Activated naive CD4-positive, alpha-beta T cell treated with anti-CD3 and anti-CD28 coated beads for 36 hours (primary cell): ENCODE measurements at regions of chr20 and their contacts with region 1.

Region 1: DNA sequence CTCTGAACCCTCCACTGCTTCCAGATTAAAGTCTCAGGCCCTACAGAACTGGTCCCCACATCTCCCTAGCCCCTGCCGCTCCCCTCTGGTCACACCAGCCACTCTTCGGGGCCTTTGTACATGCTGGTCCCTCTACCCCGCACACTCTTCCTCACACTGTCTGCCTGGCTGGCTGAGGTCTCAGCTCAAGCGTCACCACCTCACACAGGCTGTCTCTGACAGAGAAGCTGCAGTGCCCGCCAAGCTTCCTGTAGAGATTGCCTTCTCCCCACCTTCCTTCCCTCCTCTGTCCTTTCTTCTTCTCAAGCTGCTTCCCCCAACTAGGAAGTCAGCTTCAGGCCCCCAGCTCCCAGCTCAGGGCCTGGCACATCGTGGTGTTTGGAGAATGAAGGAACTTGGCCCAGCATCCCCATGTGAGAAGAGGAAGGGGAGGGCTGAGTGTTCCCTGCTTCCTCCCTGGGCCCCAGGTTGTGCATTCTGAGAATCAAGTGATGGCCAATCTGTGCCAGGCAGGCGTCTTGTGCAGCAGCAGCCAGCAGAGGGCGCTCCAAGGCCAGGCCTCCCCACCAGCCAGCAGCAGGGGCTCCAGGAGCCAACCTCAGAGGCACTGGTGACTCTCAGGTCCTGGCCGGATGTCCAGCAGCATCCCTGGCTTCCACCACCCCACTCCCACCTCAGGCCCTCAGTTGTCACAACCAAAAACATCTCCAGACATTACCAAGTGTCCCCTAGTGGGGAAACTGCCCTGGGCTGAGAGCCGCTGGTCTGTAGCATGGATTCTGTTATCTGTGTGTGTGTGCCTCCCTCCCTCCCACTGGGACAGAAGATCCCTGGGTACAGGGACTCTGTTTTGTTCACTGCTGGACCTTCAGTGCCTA is 192.1 kb downstream of the PREX1 start:
- DNase-seq: peak; percentile 78
- H3K4me3 Mint-ChIP-seq: no peak overlapping the region
- H3K27ac Mint-ChIP-seq: peak overlapping the region; percentile 33
- H3K4me1 Mint-ChIP-seq: peaks cover 4% of the 10 kb centered on the region
- H3K27me3 Mint-ChIP-seq: no peaks in the 10 kb centered on the region

Region 2: DNA sequence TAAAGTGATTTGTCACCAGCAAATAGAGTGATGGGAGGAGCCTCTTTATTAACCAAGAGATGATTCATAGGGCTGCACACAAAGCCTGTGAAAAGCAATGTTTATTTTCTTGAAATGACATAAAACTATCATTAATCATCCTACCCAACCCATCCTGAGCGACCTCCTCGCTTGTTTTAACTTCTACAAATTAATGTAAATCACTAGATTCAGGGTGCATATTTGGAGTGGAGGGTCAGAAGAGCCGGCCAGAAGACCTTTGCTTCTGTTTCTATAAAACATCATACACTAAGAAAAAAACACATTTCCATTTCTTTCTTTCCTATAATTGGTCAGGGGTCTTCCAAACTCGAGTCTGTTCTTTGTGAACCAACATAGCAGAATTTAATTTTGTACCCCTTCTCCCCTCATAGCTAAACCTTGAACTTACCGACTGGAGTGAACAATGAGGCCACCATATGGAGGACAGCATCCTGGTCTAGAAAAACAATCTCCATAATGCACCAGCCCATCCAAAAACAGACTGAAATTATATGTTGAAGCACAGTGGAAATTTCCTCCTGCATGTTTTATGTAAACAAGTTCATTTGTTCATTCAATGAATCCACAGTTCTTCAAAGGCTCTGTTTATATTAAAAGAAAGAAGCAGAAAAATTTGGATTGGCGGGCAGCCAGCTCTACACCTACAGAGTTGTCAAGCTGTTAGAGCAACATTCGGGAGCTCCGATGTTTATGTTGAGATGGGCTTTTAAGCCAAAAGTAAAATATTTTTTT is 455.3 kb before region 1 on chr20:
- CTCF ChIA-PET with region 1: no interaction called
- intact Hi-C with region 1: no loop called
- DNase-seq: no peak
- H3K4me3 Mint-ChIP-seq: no peak overlapping the region
- H3K27ac Mint-ChIP-seq: no peak overlapping the region
- H3K4me1 Mint-ChIP-seq: no peaks in the 10 kb centered on the region
- H3K27me3 Mint-ChIP-seq: no peaks in the 10 kb centered on the region

Region 3: DNA sequence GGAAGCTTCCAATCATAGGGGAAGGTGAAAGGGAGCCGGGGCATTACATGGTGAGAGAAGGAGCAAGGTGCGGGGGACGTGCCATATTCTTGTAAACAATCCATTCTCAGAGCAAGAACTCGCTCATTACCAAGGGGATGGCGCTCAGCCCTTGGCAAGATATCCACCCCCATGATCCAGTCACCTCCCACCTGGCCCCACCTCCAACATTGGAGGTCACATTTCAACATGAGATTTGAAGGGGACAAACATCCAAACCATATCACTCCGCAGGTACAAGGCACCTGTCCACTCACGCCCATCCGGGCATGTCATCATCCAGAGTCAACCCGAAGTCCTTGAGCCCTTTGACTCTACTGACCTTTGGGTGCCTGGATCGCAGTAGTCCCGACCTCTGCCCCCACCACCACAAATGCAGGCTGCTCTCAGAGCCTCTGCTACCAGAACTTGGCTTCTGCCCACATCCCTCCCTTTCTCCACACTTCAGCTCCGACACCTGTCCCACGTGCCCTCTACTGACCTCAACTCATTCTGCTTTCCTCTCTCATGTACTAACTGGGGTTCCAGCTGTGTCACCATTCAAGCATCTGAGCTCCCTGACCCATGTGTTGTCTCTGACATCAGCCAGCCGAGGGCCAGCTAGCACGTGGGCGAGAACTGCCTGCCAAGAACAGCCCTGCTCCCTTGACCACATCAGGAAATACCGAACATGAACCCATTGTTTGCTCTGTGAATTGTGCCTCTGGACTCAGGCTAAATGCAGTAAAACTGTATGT is 352.2 kb before region 1 on chr20:
- CTCF ChIA-PET with region 1: no interaction called
- intact Hi-C with region 1: no loop called
- DNase-seq: no peak
- H3K4me3 Mint-ChIP-seq: no peak overlapping the region
- H3K27ac Mint-ChIP-seq: no peak overlapping the region
- H3K4me1 Mint-ChIP-seq: no peaks in the 10 kb centered on the region
- H3K27me3 Mint-ChIP-seq: no peaks in the 10 kb centered on the region

Region 4: DNA sequence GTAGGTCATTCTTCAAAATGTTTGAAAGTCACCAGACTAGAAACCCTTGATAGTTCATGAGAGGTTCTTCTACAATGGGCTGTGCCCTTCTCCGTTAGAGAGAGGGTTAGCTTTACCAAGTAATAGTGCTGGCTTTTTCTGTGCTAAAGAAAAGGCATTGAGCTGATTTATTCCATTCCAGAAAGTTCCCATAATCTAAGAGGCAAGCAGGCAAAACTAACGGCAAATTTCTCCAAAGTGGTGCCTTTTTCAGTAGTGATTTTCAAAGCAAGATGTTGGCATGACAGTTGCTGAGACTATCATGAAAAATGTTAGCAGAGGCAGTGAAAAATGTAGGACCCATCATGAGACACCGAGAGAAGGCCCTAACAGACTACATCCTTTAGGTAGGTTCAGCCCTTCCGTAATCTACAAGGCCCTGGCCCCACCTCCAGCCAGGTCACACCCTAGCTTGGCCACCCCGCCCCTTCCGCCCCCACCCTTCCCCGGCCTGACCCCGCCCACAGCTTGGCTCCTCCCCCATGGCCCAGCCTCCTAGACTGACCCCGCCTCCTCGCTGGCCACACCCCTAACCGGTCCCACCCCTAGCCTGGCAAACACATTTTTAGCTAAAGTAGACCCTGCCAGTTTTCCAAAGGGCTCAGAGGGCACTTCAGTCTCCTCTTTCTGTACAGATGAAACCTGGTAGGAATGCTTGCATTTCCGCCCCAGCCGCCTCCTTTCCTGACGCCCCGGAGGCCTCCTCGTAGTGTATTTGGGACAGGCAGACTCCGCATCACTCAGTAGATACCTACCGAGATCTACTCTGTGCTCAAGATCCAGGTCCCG is 251.6 kb before region 1 on chr20:
- CTCF ChIA-PET with region 1: no interaction called
- intact Hi-C with region 1: no loop called
- DNase-seq: peak; percentile 18
- H3K4me3 Mint-ChIP-seq: no peak overlapping the region
- H3K27ac Mint-ChIP-seq: no peak overlapping the region
- H3K4me1 Mint-ChIP-seq: no peaks in the 10 kb centered on the region
- H3K27me3 Mint-ChIP-seq: peaks cover 6% of the 10 kb centered on the region

Region 5: DNA sequence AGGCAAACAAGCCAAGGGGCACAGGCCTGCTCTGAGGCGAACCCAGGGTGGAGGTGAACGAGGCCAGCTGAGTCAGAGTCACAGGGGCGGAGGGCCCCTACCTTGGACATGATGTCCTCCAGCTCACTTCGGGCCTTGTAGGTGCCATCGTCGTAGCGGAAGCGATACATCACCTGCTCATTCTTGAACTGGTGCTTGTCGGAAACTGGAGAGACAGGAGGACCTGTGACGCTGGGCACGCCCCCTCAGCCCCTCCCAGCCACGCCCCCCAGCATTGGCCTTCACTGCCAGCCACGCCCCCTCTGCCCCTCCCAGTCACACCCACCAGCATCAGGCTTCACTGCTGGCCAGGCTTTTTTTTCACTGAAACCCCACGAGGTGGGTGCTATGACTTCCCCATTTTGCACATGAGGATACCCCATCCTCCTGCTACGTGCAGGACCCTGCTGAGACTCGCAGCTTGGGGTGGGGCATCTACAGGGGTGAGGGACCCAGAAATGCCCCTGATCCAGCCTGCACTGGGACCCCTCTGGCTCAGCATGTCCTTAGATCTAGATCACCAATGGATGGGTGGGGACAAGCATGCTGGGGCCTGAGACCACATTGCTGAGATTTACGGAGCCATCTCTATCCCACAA is 44.0 kb after region 1 on chr20:
- CTCF ChIA-PET with region 1: no interaction called
- intact Hi-C with region 1: no loop called
- DNase-seq: no peak
- H3K4me3 Mint-ChIP-seq: no peak overlapping the region
- H3K27ac Mint-ChIP-seq: no peak overlapping the region
- H3K4me1 Mint-ChIP-seq: no peaks in the 10 kb centered on the region
- H3K27me3 Mint-ChIP-seq: no peaks in the 10 kb centered on the region

Region 6: DNA sequence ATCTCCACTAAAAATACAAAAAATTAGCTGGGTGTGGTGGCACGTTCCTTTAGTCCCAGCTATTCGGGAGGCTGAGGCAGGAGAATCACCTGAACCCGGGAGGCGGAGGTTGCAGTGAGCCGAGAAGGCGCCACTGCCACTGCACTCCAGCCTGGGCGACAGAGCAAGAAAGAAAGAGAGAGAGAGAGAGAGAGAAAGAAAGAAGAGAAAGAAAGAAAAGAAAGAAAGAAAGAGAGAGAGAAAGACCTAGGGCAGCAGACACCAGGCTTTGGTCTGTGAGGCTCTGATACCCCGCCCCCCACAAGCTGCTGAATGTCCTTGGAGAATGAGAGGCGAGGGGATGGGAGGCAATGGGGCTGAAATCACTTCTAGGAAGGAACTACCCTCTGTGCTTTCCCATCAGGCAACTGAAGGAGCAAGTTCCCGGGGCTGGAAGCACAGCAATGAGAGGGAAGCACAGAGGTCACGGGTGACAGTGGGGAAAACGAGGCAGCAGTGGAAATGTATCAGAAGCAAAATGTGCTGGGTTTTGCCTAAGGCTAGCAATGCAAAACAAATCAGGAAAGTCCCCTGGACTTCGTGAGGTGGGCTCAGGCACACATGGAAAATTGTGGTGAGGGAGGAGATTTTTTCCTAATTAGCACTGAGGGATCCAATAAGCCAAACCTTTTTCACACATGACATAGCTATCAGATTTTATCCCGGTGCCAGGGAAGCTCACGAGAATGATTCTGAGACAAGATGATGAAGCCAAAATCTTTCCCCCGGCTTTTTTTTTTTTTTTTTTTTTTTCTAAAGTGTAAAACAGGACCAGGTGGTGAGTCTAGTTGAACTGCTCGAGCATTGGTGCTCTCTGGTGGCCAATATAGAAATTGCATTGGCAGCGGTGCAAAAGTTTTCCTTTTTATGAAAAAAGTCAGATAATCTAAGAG is 269.0 kb after region 1 on chr20:
- CTCF ChIA-PET with region 1: interaction called, 12 read pairs
- intact Hi-C with region 1: loop called (anchors 1 kb)
- DNase-seq: peak; percentile 85
- H3K4me3 Mint-ChIP-seq: no peak overlapping the region
- H3K27ac Mint-ChIP-seq: no peak overlapping the region
- H3K4me1 Mint-ChIP-seq: peaks cover 5% of the 10 kb centered on the region
- H3K27me3 Mint-ChIP-seq: no peaks in the 10 kb centered on the region